Aorta (tissue), 5 donors: ENCODE measurements at regions of chr15 and their contacts with region 1.

Region 1: DNA sequence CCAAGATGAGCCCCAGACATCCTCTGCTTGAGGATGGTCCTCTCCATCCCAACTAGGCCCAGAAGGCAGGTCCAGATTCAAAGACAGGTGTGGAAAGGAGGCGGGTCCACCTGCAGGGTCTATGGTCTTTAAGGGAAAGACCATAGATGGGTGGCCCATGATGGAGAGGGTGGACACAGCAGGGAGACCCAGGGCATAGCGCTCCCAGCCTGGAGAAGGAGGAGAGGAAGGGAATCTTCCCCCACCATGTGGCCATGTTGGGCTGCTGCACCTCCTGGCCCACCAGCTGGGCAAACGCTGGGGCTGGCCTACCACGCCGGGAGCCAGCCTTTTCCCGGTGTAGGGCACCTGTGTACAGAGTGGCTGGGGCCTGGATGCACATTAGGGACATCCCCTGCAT is 265.2 kb upstream of the TLE3 start:
- DNase-seq: peak in 1 of 2 donors; percentile 73
- ATAC-seq: peak; percentile 62
- H3K4me3 ChIP-seq: no peak overlapping the region
- H3K27ac ChIP-seq: no peak overlapping the region
- H3K4me1 ChIP-seq: no peaks in the 10 kb centered on the region
- H3K27me3 ChIP-seq: no peaks in the 10 kb centered on the region

Region 2: GRCh38 chr15:70172566-70173290 is 190.2 kb before region 1 on chr15:
- intact Hi-C with region 1: no loop called
- DNase-seq: no peak
- ATAC-seq: no peak
- H3K4me3 ChIP-seq: no peak overlapping the region
- H3K27ac ChIP-seq: no peak overlapping the region
- H3K4me1 ChIP-seq: no peaks in the 10 kb centered on the region
- H3K27me3 ChIP-seq: no peaks in the 10 kb centered on the region

Region 3: GRCh38 chr15:70426105-70426821 is 63.4 kb after region 1 on chr15:
- intact Hi-C with region 1: loop called in 1 of 2 experiments (anchors 10 kb)
- DNase-seq: no peak
- ATAC-seq: no peak
- H3K4me3 ChIP-seq: no peak overlapping the region
- H3K27ac ChIP-seq: no peak overlapping the region
- H3K4me1 ChIP-seq: no peaks in the 10 kb centered on the region
- H3K27me3 ChIP-seq: no peaks in the 10 kb centered on the region